ENCODE measurements at regions of chr18 and their contacts with region 1.

Region 1: GRCh38 chr18:48800876-48801727 is 149.7 kb downstream of the SMAD7 start:
- DNase-seq: no peak
- H3K4me3 Mint-ChIP-seq: peak overlapping the region; percentile 75
- H3K27ac Mint-ChIP-seq: peak overlapping the region; percentile 99
- H3K4me1 Mint-ChIP-seq: peaks cover 66% of the 10 kb centered on the region
- H3K27me3 Mint-ChIP-seq: no peaks in the 10 kb centered on the region

Region 2: DNA sequence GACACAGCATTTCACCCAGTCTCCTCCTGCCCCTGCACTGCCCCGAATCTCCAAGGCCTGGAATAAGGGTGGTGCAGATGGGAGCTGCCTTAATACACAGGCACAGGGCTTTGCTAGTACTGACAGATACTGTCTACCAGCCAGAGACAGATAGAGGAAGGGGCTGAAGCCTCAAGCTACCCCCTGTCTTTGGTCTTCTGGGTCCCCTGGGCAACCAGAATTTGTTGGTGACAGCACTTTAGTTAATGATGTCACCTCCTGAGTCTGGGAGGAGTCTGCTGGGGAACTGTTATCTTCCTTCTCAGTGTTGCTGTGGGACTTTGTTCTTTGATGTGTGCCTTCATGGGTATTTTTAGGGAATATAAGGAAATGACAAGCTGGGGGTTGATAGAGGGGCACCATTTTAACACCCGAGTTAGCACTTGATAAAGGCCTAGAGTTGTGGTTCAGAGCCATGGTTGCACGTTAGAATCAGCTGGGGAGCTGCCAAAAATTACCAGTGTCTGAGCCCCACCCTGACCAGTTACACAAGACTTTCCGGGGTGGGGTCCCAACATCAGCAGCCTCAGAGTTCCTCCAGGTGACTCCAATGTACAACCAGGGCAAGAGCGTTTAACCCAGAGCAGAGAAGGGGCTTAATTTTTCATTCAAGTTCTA is 12.9 kb after region 1 on chr18:
- intact Hi-C with region 1: loop called (anchors 1 kb)
- DNase-seq: peak; percentile 36
- H3K4me3 Mint-ChIP-seq: peak overlapping the region; percentile 40
- H3K27ac Mint-ChIP-seq: peak overlapping the region; percentile 90
- H3K4me1 Mint-ChIP-seq: peaks cover 62% of the 10 kb centered on the region
- H3K27me3 Mint-ChIP-seq: peaks cover 4% of the 10 kb centered on the region

Region 3: DNA sequence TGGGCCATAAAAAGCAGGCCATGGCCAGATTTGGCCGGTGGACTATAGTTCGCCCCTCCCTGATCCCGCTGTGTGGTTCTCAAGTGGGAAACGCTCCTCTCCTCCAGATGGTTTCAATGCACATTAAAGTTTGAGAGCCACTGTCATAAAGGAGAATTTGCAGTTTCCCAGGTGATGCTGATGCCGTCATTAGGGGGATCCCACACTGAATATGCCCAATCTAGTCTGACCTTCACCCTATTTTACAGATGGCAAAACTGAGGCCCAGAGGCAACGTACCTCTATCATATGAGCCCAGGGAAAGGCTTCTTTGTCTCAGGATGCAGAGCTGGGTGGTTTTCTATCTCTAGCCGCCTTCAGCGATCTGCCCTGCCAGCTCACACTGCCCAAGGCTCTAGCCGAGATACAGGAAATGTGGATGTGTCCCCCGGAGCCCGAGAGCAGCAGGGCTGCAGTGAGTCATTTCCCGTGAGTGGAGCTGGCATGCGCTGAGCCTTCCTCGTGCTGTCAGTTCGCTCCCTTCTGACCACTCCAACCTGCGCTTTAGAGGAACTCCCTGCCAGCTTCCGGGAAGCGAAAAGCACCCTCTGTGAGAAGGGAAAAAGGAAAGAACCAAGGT is 33.4 kb after region 1 on chr18:
- intact Hi-C with region 1: loop called (anchors 1 kb)
- DNase-seq: peak; percentile 68
- H3K4me3 Mint-ChIP-seq: peak overlapping the region; percentile 86
- H3K27ac Mint-ChIP-seq: peak overlapping the region; percentile 99
- H3K4me1 Mint-ChIP-seq: peaks cover 77% of the 10 kb centered on the region
- H3K27me3 Mint-ChIP-seq: peaks cover 2% of the 10 kb centered on the region

Region 4: DNA sequence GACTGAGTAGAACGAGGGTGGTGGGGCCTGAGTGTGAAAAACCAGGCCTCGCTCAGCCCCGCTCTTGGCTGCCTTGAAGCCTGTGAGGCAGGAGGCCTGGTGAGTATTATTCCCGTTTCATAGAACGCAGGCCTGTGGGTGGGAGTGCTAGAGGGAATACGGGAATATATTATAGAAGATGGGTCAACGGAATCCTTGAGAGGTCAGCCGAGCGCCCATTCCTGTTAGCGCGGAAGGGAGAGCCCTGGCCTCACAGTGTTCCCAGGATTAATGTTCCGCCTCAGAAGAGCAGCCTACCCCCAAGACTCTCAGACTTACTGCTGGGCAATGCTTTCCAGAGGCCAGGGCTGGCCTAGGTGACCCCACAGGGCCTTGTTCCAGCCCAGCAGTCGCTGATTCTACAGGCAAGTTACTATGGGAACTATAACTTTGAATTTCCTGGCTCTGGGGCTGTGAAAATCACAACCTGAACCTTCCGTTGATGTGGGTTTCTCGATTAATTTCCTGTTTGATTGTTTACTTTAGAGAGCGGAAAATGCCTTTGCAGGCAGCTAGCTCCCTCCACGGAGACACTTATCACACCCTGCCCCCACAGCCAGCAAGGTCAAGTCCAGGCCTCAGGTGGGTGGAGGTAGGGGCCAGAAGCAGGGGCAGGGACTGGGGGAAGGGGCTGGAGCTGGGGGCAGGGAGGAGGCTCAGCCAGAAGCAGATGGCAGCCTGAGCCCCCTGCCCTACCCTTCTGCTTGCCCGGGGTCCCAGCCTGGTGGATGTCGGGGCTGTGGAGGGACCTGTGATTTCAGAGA is 41.4 kb after region 1 on chr18:
- intact Hi-C with region 1: loop called (anchors 1 kb)
- DNase-seq: peak; percentile 38
- H3K4me3 Mint-ChIP-seq: peak overlapping the region; percentile 39
- H3K27ac Mint-ChIP-seq: peak overlapping the region; percentile 87
- H3K4me1 Mint-ChIP-seq: peaks cover 59% of the 10 kb centered on the region
- H3K27me3 Mint-ChIP-seq: peaks cover 4% of the 10 kb centered on the region

Region 5: GRCh38 chr18:48934723-48935432 is 133.8 kb after region 1 on chr18:
- intact Hi-C with region 1: loop called (anchors 1 kb)
- DNase-seq: no peak
- H3K4me3 Mint-ChIP-seq: peak overlapping the region; percentile 48
- H3K27ac Mint-ChIP-seq: peak overlapping the region; percentile 75
- H3K4me1 Mint-ChIP-seq: peaks cover 82% of the 10 kb centered on the region
- H3K27me3 Mint-ChIP-seq: no peaks in the 10 kb centered on the region

Measured in activated T-helper 1 cell treated with anti-CD3 and anti-CD28 coated beads, Interleukin-12 subunit alpha, Interleukin-12 subunit beta, Interleukin-2, Interleukin-4 antibody, amounts not matched to agents 30 ng/mL and 10 ng/mL and 1 ng/mL, durations not matched to agents 14 hours and 24 hours and 36 hours (primary cell).